IMR-90 (cell line): ENCODE measurements at regions of chr2 and their contacts with region 1.

Region 1: GRCh38 chr2:12587729-12588522 is 128.8 kb upstream of the TRIB2 start:
- DNase-seq: peak; percentile 96
- ATAC-seq: peak; percentile 100
- H3K4me3 ChIP-seq: no peak overlapping the region
- H3K27ac ChIP-seq: peak overlapping the region; percentile 31; the same call in 1 of the 2 replicates
- H3K4me1 ChIP-seq: peaks cover 2% of the 10 kb centered on the region; the same call in 1 of the 2 replicates
- H3K27me3 ChIP-seq: no peaks in the 10 kb centered on the region
- CTCF ChIP-seq: no peak
- POLR2A ChIP-seq: no peak
- RAD21 ChIP-seq: peak; percentile 34

Region 2: GRCh38 chr2:12433628-12433994 is 154.3 kb before region 1 on chr2:
- CTCF ChIA-PET with region 1: no interaction called
- POLR2A ChIA-PET with region 1: no interaction called
- dilution Hi-C with region 1: no loop called
- in situ Hi-C with region 1: no loop called
- intact Hi-C with region 1: no loop called
- DNase-seq: no peak
- ATAC-seq: no peak
- H3K4me3 ChIP-seq: no peak overlapping the region
- H3K27ac ChIP-seq: no peak overlapping the region
- H3K4me1 ChIP-seq: peaks cover 14% of the 10 kb centered on the region
- H3K27me3 ChIP-seq: no peaks in the 10 kb centered on the region
- CTCF ChIP-seq: no peak
- POLR2A ChIP-seq: no peak
- RAD21 ChIP-seq: no peak

Region 3: GRCh38 chr2:12619975-12620374 is 32.0 kb after region 1 on chr2:
- CTCF ChIA-PET with region 1: no interaction called
- POLR2A ChIA-PET with region 1: no interaction called
- dilution Hi-C with region 1: no loop called
- in situ Hi-C with region 1: no loop called
- intact Hi-C with region 1: loop called (anchors 1 kb)
- DNase-seq: peak; percentile 92
- ATAC-seq: peak; percentile 77
- H3K4me3 ChIP-seq: no peak overlapping the region
- H3K27ac ChIP-seq: no peak overlapping the region
- H3K4me1 ChIP-seq: peaks cover 5% of the 10 kb centered on the region
- H3K27me3 ChIP-seq: no peaks in the 10 kb centered on the region
- CTCF ChIP-seq: no peak
- POLR2A ChIP-seq: no peak
- RAD21 ChIP-seq: no peak

Region 4: GRCh38 chr2:12702305-12703121 is 114.6 kb after region 1 on chr2:
- CTCF ChIA-PET with region 1: no interaction called
- POLR2A ChIA-PET with region 1: no interaction called
- dilution Hi-C with region 1: no loop called
- in situ Hi-C with region 1: no loop called
- intact Hi-C with region 1: loop called (anchors 10 kb)
- DNase-seq: peak; percentile 90
- ATAC-seq: peak; percentile 72
- H3K4me3 ChIP-seq: no peak overlapping the region
- H3K27ac ChIP-seq: peak overlapping the region; percentile 80
- H3K4me1 ChIP-seq: peaks cover 11% of the 10 kb centered on the region
- H3K27me3 ChIP-seq: no peaks in the 10 kb centered on the region
- CTCF ChIP-seq: no peak
- POLR2A ChIP-seq: no peak; the same call in 1 of the 2 replicates
- RAD21 ChIP-seq: 0 out of 2 replicates have a peak, but pooled peaks have one; percentile 2